Activated CD4-positive, alpha-beta memory T cell treated with anti-CD3 and anti-CD28 coated beads for 36 hours (primary cell): ENCODE measurements at regions of chr12 and their contacts with region 1.

Region 1: GRCh38 chr12:9750276-9751203 is 10.2 kb downstream of the CD69 start:
- DNase-seq: peak; percentile 63
- H3K4me3 Mint-ChIP-seq: peak overlapping the region; percentile 50
- H3K27ac Mint-ChIP-seq: peak overlapping the region; percentile 83
- H3K4me1 Mint-ChIP-seq: peaks cover 51% of the 10 kb centered on the region
- H3K27me3 Mint-ChIP-seq: no peaks in the 10 kb centered on the region

Region 2: DNA sequence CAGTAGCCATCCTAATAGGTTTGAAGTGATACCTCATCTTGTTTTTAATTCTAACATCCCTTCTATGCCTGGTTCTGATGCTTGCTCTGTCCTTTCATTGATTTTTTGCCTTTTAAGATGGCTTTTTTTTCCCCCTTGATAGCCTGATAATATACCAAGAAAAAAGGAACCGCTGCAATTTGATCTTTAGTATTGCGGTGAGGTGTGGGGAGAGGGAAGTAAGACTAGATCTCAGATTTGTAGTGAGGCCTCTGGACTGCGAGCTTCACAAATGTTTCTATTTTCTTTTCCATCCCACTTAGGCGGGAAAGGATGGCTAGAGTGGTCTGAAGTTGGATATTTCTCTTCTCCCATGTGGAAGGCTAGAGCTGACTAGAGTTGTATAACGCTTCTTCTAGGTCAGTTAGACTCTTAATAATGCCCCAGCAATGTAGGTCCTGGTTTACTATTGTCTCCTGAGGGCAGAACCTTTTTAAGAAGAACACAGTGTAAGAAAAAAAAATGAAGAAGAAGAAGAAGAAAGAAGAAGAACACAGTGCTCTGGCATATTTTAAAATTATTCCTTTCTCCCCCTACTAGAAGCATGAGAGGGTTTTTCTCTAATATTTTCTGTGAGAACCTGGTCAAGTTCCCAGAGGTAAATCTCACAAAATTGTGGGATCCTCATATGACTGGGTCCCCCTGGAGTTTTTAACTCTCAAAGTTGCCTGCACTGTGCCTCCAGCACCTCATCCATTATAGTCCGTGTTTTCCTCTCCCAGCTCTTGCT is 130.9 kb before region 1 on chr12:
- CTCF ChIA-PET with region 1: no interaction called
- POLR2A ChIA-PET with region 1: no interaction called
- intact Hi-C with region 1: no loop called
- DNase-seq: no peak
- H3K4me3 Mint-ChIP-seq: no peak overlapping the region
- H3K27ac Mint-ChIP-seq: no peak overlapping the region
- H3K4me1 Mint-ChIP-seq: peaks cover 48% of the 10 kb centered on the region
- H3K27me3 Mint-ChIP-seq: no peaks in the 10 kb centered on the region

Region 3: DNA sequence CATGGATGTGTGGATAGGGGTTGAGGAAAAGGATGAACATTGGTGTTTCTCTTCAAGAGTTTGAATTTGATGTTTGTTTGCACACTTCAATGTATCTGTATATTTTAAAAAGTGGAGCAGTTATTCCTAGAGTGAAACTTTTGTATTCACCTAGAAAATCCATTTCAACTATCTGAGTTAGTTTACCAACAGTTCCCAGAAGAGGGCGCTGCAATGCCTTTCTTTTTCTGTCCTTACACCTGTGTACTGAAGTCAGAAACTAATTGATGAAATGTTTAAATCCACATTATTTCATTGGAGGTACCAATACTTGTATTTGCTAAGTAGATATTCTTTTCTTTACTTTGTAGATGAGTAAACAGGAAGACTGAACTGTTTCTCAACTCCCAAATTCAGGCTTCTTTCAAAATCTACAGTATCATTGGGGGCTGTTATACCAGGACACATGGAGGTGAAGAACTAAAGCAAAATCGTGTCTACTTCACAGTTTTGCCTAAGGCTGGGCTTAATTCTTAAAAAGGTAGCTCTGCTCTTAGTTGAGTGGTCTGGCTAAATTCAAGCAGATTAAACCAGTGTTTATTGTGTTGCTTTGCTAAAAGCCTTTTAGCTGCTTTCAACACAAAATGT is 116.2 kb before region 1 on chr12:
- CTCF ChIA-PET with region 1: interaction called, 10 read pairs
- POLR2A ChIA-PET with region 1: interaction called, 3 read pairs
- intact Hi-C with region 1: no loop called
- DNase-seq: peak; percentile 81
- H3K4me3 Mint-ChIP-seq: no peak overlapping the region
- H3K27ac Mint-ChIP-seq: peak overlapping the region; percentile 66
- H3K4me1 Mint-ChIP-seq: peaks cover 60% of the 10 kb centered on the region
- H3K27me3 Mint-ChIP-seq: no peaks in the 10 kb centered on the region

Region 4: GRCh38 chr12:9694241-9694640 is 56.3 kb before region 1 on chr12:
- CTCF ChIA-PET with region 1: no interaction called
- POLR2A ChIA-PET with region 1: no interaction called
- intact Hi-C with region 1: no loop called
- DNase-seq: no peak
- H3K4me3 Mint-ChIP-seq: no peak overlapping the region
- H3K27ac Mint-ChIP-seq: peak overlapping the region; percentile 47
- H3K4me1 Mint-ChIP-seq: peaks cover 47% of the 10 kb centered on the region
- H3K27me3 Mint-ChIP-seq: no peaks in the 10 kb centered on the region

Region 5: GRCh38 chr12:9760699-9761418 is 10.3 kb after region 1 on chr12 and contains the start of gene CD69:
- CTCF ChIA-PET with region 1: interaction called, 74 read pairs
- POLR2A ChIA-PET with region 1: interaction called, 45 read pairs
- intact Hi-C with region 1: loop called (anchors 1 kb)
- DNase-seq: peak; percentile 90
- H3K4me3 Mint-ChIP-seq: peak within 1 kb of the TSS; percentile 100
- H3K27ac Mint-ChIP-seq: peak within 1 kb of the TSS; percentile 99
- H3K4me1 Mint-ChIP-seq: peaks cover 52% of the 10 kb centered on the region
- H3K27me3 Mint-ChIP-seq: peaks cover 2% of the 10 kb centered on the region
- total RNA-seq, gene CD69: 118 to 120 TPM

Region 6: GRCh38 chr12:9813821-9814809 is 63.6 kb after region 1 on chr12:
- CTCF ChIA-PET with region 1: interaction called, 139 read pairs
- POLR2A ChIA-PET with region 1: no interaction called
- intact Hi-C with region 1: no loop called
- DNase-seq: peak; percentile 91
- H3K4me3 Mint-ChIP-seq: peak overlapping the region; percentile 72
- H3K27ac Mint-ChIP-seq: no peak overlapping the region
- H3K4me1 Mint-ChIP-seq: peaks cover 12% of the 10 kb centered on the region
- H3K27me3 Mint-ChIP-seq: peaks cover 19% of the 10 kb centered on the region

Region 7: DNA sequence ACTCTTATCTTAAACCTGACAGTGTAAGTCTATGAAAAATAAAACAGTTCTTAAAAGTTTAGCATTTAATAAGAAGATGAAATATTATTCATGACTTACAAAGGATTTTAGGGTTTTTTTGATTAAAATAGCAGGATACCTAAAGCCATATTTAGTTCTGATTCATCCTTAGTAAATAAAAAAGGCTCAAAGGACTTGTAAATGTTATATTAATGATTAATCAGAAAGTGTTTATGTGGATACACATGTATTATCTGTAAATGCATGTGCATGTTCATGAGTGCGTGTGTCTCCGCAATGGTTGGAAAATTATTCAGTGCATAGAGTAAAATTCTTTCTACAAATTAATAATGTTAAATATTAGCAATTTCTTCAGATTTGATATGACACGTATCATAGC is 81.2 kb after region 1 on chr12:
- CTCF ChIA-PET with region 1: no interaction called
- POLR2A ChIA-PET with region 1: no interaction called
- intact Hi-C with region 1: no loop called
- DNase-seq: no peak
- H3K4me3 Mint-ChIP-seq: no peak overlapping the region
- H3K27ac Mint-ChIP-seq: no peak overlapping the region
- H3K4me1 Mint-ChIP-seq: no peaks in the 10 kb centered on the region
- H3K27me3 Mint-ChIP-seq: no peaks in the 10 kb centered on the region

Region 8: GRCh38 chr12:9925708-9926393 is 175.3 kb after region 1 on chr12:
- CTCF ChIA-PET with region 1: interaction called, 58 read pairs
- POLR2A ChIA-PET with region 1: no interaction called
- intact Hi-C with region 1: loop called (anchors 1 kb)
- DNase-seq: no peak
- H3K4me3 Mint-ChIP-seq: peak overlapping the region; percentile 45
- H3K27ac Mint-ChIP-seq: no peak overlapping the region
- H3K4me1 Mint-ChIP-seq: peaks cover 14% of the 10 kb centered on the region
- H3K27me3 Mint-ChIP-seq: peaks cover 3% of the 10 kb centered on the region

Region 9: DNA sequence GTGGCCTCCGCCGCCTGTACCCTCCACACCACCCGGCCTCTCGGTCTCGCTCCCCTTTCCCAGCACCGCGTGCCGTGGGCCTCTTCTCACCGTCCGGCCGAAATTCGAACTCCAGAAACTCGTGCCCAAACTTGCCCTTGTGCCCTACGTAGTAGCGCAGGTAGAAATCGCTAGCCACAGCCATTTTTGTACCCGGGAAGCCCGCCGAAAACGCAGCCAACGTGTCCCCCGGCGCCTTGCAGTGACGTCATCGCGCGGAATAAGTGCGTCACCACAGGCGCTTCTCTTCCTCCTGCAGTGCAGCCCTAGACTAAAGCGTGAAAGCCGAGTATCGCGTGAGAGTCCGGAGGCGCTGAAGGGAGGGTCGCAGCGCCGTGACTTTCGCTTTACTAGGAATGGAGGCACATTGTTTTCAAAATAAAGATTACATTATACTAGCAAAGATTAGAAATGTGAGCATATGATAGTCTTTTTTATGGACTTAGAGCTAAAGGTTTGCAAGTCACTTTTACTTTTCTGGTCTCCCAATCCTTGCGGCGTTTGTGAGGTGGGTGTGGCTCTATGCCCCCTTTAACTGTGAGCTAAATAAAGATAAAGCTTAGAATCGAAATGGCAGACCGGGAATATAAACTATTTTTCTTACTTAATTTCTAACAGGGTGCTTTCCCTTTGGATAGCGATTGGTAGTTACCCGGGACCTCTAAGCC is 863.0 kb after region 1 on chr12 and contains the start of gene MAGOHB:
- CTCF ChIA-PET with region 1: no interaction called
- POLR2A ChIA-PET with region 1: no interaction called
- intact Hi-C with region 1: loop called (anchors 10 kb)
- DNase-seq: peak; percentile 99
- H3K4me3 Mint-ChIP-seq: peak within 1 kb of the TSS; percentile 98
- H3K27ac Mint-ChIP-seq: peak within 1 kb of the TSS; percentile 99
- H3K4me1 Mint-ChIP-seq: peaks cover 34% of the 10 kb centered on the region
- H3K27me3 Mint-ChIP-seq: peaks cover 8% of the 10 kb centered on the region
- total RNA-seq, gene MAGOHB: 66.2 to 69.1 TPM